ENCODE measurements at regions of chr3 and their contacts with region 1.

Region 1: DNA sequence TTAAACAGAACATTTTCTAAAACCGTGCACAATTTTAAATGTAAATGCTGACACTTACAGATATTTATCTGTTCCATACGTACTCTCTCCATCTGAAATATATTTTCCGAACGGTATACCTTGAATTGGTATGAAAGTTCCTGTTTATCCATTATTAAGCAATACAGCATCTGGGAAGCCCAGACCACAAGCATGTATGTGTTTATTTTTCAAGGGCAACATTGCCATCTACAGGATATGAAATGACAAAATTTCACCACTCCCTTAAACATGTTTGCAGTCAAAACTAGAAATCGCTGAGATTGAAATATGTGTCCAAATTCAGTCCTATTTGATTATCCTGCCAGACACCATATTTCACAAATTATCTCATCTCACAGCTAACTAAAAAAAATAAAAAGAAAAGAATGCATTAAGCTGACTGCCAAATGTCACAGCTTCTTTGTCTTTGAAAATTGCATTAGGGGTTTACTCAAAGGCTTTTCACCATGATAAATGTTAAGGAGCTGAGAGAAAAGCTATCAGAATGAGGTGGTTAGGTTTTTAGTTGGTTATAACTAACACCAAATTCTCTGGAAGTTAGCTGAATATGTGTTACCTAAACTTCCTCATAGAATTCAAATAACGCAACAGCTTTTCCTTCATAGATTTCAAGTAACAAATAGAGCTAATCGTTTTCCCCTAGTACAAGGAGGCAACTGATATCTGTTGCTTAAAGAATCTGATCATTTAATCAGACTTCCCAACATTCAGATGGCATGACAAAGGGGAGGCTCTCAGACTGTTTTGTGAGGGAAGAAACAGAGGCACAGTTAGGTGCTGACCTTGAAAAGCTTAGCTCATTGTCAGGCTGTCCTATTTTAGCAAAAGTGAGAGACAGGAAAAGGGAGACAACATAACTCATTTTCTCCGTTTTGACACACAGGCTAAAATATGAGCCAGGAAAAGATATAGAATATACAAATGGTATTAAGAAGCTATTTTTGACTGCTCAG is 533.1 kb downstream of the TBL1XR1 start:
- DNase-seq: peak; percentile 18
- H3K4me3 Mint-ChIP-seq: no peak overlapping the region
- H3K27ac Mint-ChIP-seq: no peak overlapping the region
- H3K4me1 Mint-ChIP-seq: peaks cover 9% of the 10 kb centered on the region
- H3K27me3 Mint-ChIP-seq: no peaks in the 10 kb centered on the region
- CTCF ChIP-seq: peak; percentile 21

Region 2: DNA sequence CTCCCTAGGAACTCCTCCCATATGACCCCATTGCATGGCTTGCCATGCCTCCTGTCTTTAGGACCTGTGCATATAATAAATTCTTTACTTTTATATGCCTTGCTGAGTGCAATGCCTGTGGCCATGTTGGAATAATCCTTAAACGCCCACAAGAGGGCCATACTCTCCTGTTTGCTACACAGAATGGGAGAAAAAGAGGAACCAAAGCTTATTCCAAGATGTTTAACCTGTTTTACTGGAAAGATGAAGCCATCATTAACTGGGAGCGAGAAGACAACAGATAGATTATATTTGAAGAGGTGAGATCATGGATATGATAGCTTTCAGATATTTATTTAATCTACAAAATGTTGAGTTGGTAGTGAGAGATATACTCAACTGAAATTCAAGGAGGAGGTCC is 707.1 kb before region 1 on chr3:
- CTCF ChIA-PET with region 1: no interaction called
- intact Hi-C with region 1: loop called (anchors 10 kb)
- DNase-seq: peak; percentile 14
- H3K4me3 Mint-ChIP-seq: no peak overlapping the region
- H3K27ac Mint-ChIP-seq: no peak overlapping the region
- H3K4me1 Mint-ChIP-seq: no peaks in the 10 kb centered on the region
- H3K27me3 Mint-ChIP-seq: no peaks in the 10 kb centered on the region
- CTCF ChIP-seq: peak; percentile 32

Region 3: DNA sequence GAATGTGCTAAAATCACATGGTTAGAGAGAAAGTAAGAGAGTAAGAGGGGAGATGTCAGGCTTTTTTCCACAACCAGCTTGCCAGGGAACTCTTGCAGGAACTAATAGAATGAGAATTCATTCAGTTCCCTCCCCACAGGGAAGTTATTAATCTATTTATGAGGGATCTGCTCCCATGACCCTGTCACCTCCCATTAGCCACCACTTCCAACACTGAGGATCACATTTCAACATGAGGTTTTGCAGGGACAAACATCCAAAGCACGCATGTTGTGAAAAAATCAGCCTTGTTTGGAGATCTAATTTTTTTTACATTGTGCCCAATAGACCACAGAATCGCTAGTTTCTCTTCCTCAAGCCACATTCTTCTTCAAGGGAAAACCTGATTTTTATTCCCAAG is 370.9 kb before region 1 on chr3:
- CTCF ChIA-PET with region 1: no interaction called
- intact Hi-C with region 1: loop called (anchors 5 kb)
- DNase-seq: no peak
- H3K4me3 Mint-ChIP-seq: no peak overlapping the region
- H3K27ac Mint-ChIP-seq: no peak overlapping the region
- H3K4me1 Mint-ChIP-seq: no peaks in the 10 kb centered on the region
- H3K27me3 Mint-ChIP-seq: no peaks in the 10 kb centered on the region
- CTCF ChIP-seq: no peak

Region 4: DNA sequence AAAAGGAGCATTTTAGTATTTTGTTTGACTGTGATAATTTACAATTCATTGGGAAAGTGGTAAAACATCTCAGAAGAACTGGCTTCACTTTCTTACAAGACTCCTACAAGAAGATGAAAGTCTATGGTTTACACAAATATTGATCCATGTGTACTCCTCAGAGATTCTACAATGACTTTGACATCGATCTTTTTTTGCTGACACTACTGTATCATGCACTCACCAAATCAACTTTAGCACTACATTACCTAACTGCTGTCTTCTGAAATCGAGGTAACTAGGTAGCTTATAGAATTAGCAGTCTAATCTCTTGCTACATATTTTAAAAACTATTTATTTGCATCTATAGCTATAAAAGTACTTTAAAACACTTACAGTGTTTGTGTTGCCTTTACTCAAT is 224.4 kb before region 1 on chr3:
- CTCF ChIA-PET with region 1: no interaction called
- intact Hi-C with region 1: loop called (anchors 5 kb)
- DNase-seq: no peak
- H3K4me3 Mint-ChIP-seq: no peak overlapping the region
- H3K27ac Mint-ChIP-seq: no peak overlapping the region
- H3K4me1 Mint-ChIP-seq: no peaks in the 10 kb centered on the region
- H3K27me3 Mint-ChIP-seq: no peaks in the 10 kb centered on the region
- CTCF ChIP-seq: no peak

Region 5: GRCh38 chr3:176514297-176514696 is 149.8 kb before region 1 on chr3:
- CTCF ChIA-PET with region 1: no interaction called
- intact Hi-C with region 1: loop called (anchors 2 kb)
- DNase-seq: peak; percentile 37
- H3K4me3 Mint-ChIP-seq: no peak overlapping the region
- H3K27ac Mint-ChIP-seq: no peak overlapping the region
- H3K4me1 Mint-ChIP-seq: no peaks in the 10 kb centered on the region
- H3K27me3 Mint-ChIP-seq: no peaks in the 10 kb centered on the region
- CTCF ChIP-seq: peak; percentile 58